ENCODE measurements at regions of chr11 and their contacts with region 1.

Region 1: GRCh38 chr11:65448418-65449105 is 26.0 kb downstream of the NEAT1 start:
- DNase-seq: peak in 1 of 2 experiments; percentile 64
- ATAC-seq: peak; percentile 6 to 24; a peak in 5 of 6 replicates
- H3K4me3 ChIP-seq: no peak overlapping the region
- H3K27ac ChIP-seq: peak overlapping the region in 1 of 2 experiments; percentile 76; a peak in 3 of 6 replicates
- H3K4me1 ChIP-seq: peaks cover 71% of the 10 kb centered on the region
- CTCF ChIP-seq: no peak
- EP300 ChIP-seq: no peak
- POLR2A ChIP-seq: no peak
- RAD21 ChIP-seq: no peak

Region 2: DNA sequence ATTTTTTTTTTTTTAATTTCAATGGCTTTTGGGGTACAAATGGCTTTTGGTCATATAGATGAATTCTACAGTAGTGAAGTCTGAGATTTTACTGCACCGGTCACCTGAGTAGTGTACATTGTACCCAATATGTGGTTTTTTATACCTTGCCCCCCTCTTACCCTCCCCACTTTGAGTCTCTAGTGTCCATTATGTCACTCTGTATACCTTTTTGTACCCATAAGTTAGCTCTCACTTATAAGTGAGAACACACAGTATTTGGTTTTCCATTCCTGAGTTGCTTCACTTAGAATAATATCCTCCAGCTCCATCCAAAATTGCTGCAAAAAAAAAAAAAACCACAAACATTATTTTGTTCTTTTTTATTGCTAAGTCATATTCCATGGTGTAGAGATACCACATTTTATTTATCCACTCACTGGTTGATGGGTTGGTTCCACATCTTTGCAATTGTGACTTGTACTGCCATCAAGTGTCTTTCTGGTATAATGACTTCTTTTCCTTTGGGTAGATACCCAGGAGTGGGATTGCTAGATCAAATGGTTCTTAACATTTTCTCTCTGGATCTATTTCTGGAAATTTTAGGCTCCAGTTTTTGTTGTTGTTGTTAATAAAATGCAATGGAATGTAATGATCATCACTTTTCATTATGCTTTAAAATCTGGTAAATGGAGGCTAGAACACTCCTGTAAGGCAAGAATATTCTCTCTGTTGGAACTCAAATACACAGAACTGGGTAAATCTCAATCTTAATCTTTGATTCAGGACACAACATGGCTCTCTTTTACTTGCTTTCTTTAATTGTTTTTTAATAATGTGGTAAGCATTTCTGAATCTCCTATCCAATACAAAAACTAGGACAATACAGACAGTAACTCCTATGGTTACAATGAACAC is 15.6 kb before region 1 on chr11:
- CTCF ChIA-PET with region 1: interaction called, 4 read pairs
- POLR2A ChIA-PET with region 1: interaction called, 12 read pairs
- DNase-seq: peak in 1 of 2 experiments; percentile 75
- ATAC-seq: no peak
- H3K4me3 ChIP-seq: no peak overlapping the region
- H3K27ac ChIP-seq: peak overlapping the region; percentile 43 to 55; a peak in 4 of 6 replicates
- H3K4me1 ChIP-seq: peaks cover 85% of the 10 kb centered on the region
- CTCF ChIP-seq: peak; percentile 52
- EP300 ChIP-seq: no peak
- POLR2A ChIP-seq: no peak
- RAD21 ChIP-seq: peak; percentile 58 to 59

Region 3: DNA sequence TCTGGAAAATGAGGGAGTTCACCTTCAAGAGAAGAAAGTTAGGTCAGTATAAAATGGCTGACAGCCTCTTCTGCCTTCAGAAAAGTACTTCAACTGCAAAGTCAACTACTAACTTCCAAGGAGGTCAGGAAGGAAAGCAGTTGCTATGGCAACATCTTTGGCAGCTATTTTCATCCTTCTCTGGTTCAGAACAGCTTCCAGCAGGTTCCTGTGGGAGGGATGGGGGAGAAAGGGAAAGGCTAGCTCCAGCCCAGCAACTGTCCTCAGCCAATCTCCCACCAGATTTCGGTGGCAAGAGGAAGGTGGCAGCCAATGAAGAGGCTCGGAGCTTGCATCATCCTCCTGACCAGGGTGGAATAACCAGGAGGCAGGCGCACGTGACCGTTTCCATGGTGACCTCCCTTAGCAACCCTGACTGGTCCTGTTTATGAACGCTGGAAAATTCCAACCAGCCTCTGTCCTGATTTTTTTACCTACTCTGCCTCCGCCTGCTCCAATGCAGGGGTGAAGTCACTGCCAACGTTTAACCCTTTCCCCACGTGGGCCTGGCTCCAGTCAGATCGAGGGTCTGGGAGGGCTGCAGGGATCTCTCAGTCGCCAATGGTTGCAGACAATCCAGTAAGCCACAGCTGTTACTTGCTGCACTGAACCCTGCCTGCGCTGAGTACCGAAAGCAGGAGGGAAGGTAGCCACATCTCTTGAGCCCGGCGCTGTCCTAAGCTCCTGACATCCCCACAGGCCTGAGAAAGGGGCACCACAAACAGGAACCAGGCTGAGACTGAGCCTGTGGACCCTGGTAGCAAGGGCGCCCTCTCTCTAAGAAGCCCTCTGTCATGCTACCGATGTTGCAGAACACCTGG is 39.1 kb after region 1 on chr11:
- CTCF ChIA-PET with region 1: interaction called, 7 read pairs
- POLR2A ChIA-PET with region 1: interaction called, 12 read pairs
- DNase-seq: peak; percentile 99 to 100
- ATAC-seq: peak; percentile 75 to 83
- H3K4me3 ChIP-seq: 0 out of 3 replicates have a peak overlapping the region, but pooled peaks have one; percentile 3
- H3K27ac ChIP-seq: peak overlapping the region; percentile 99 to 100
- H3K4me1 ChIP-seq: peaks cover 82% of the 10 kb centered on the region
- CTCF ChIP-seq: no peak
- EP300 ChIP-seq: peak in 1 of 2 experiments; percentile 51; a peak in 2 of 5 replicates
- POLR2A ChIP-seq: no peak
- RAD21 ChIP-seq: no peak; a peak in 1 of 5 replicates

Region 4: DNA sequence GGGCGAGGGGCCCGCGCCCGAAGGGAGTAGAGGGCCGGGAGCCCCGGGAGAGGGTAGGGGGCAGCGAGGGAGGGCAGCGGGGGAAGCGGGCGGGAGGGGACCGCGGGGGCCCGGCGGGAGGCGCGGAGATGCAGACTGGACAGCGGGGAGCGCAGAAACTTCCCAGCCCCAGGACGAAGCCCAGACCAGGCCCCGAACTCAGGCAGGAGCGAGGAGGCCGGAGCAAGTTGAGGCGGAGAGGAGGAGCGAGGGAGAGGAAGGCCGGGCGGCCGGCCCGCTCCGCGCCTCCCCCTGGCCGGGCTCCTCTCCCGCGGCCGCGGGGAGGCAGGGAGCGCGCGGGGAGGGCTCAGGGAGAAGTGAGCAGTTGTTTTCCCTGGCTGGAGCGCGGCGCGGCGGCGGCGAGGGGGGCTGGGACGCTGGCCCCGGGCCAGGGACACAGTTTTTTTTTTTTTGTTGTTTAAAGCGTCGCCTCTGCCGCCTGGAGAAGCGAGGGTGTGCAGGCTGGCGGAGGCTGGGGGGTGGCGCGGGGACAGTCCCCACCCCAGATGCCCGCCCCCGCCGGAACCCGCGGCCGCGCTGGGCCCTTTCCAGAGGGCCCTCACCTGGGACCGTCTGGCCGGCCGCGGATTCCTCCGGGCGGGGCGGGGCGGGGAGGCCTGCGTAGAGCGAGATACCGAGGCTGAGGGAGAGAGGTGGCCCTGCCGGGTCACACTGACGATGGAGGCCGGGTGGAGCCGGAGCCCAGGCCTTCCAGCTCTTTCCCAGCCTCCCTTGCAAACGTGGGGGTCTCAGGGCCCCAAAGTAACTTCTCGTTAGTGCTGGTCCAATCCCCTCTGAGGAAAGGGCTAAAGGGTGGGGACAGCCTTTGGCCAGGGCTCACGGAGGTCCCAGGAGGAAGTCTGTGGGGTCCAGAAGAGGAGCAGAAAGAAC is 109.7 kb after region 1 on chr11 and contains the start of gene LTBP3:
- CTCF ChIA-PET with region 1: no interaction called
- POLR2A ChIA-PET with region 1: no interaction called
- DNase-seq: peak; percentile 59 to 64
- ATAC-seq: peak; percentile 9 to 30; a peak in 5 of 6 replicates
- H3K4me3 ChIP-seq: peak within 1 kb of the TSS; percentile 62
- H3K27ac ChIP-seq: peak within 1 kb of the TSS; percentile 94 to 99
- H3K4me1 ChIP-seq: peaks cover 75% of the 10 kb centered on the region
- CTCF ChIP-seq: no peak
- EP300 ChIP-seq: no peak; a peak in 1 of 5 replicates
- POLR2A ChIP-seq: 0 out of 2 replicates have a peak, but pooled peaks have one; percentile 18
- RAD21 ChIP-seq: no peak
- polyA plus RNA-seq, gene LTBP3: 28.6 and 39.9 TPM in 2 replicates